AG04449 (cell line): ENCODE measurements at regions of chr1 and their contacts with region 1.

Region 1: GRCh38 chr1:7667625-7668218 is 103.4 kb upstream of the VAMP3 start:
- DNase-seq: no peak
- H3K4me3 ChIP-seq: no peak overlapping the region
- CTCF ChIP-seq: peak; percentile 100

Region 2: DNA sequence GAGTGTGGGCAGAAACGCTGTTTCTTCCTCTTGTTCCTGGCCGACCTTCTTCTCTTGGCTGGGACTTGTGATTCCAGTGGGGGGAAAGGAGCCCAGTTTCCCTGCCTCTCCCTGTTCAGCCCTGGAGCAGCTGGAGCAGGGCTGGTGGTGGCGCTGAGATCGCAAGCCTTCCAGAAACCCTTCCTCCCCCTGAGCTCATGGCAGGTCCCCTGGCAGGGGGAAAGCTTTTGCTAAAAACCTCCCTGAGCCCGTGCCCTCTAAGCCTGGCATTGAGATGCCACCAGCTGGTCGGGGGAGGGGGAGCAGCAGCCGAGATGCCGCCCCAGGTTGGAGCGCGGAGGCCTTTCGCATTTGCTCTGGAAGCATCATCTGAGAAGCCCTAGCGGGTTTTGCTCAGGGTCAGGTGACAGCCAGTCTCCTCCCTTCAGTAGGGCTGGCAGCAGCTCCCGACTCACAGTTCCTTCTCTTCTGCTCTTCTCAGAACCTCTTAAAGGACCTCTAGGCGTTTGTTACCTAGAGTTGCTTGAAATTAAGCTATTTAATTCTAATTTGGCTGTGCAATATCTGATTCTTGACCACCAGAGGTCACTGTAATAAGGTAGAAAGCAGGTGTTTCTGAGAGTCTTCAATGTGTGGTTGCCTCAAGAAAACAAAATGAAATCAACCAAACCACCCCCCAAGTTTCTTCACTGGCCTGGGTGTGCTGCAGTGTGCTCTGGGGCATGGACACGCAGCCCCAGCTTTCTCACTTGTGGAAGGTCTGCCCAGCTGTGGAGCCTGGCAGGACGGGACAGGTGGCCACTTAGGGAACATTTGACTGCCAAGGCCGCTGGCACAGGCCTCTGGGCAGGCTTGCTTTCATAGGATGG is 625.2 kb before region 1 on chr1:
- CTCF ChIA-PET with region 1: interaction called, 17 read pairs
- POLR2A ChIA-PET with region 1: no interaction called
- DNase-seq: no peak
- H3K4me3 ChIP-seq: no peak overlapping the region
- CTCF ChIP-seq: peak; percentile 17

Region 3: GRCh38 chr1:7432102-7432899 is 235.4 kb before region 1 on chr1:
- CTCF ChIA-PET with region 1: no interaction called
- POLR2A ChIA-PET with region 1: no interaction called
- DNase-seq: no peak
- H3K4me3 ChIP-seq: no peak overlapping the region
- CTCF ChIP-seq: no peak

Region 4: GRCh38 chr1:7690496-7691182 is 22.9 kb after region 1 on chr1:
- CTCF ChIA-PET with region 1: interaction called, 52 read pairs
- POLR2A ChIA-PET with region 1: interaction called, 3 read pairs
- DNase-seq: no peak
- H3K4me3 ChIP-seq: no peak overlapping the region
- CTCF ChIP-seq: no peak

Region 5: GRCh38 chr1:7717744-7718368 is 50.1 kb after region 1 on chr1:
- CTCF ChIA-PET with region 1: interaction called, 10 read pairs
- POLR2A ChIA-PET with region 1: no interaction called
- DNase-seq: no peak
- H3K4me3 ChIP-seq: no peak overlapping the region
- CTCF ChIP-seq: no peak

Region 6: GRCh38 chr1:7752512-7753417 is 85.0 kb after region 1 on chr1:
- CTCF ChIA-PET with region 1: interaction called, 1,214 read pairs
- POLR2A ChIA-PET with region 1: interaction called, 5 read pairs
- DNase-seq: peak; percentile 9
- H3K4me3 ChIP-seq: peak overlapping the region; percentile 46
- CTCF ChIP-seq: peak; percentile 53

Region 7: GRCh38 chr1:7808253-7808844 is 140.6 kb after region 1 on chr1:
- CTCF ChIA-PET with region 1: interaction called, 14 read pairs
- POLR2A ChIA-PET with region 1: no interaction called
- DNase-seq: no peak
- H3K4me3 ChIP-seq: no peak overlapping the region
- CTCF ChIP-seq: peak; percentile 39

Region 8: GRCh38 chr1:7942214-7942921 is 274.6 kb after region 1 on chr1:
- CTCF ChIA-PET with region 1: interaction called, 21 read pairs
- POLR2A ChIA-PET with region 1: no interaction called
- DNase-seq: no peak
- H3K4me3 ChIP-seq: peak overlapping the region; percentile 44
- CTCF ChIP-seq: peak; percentile 69

Region 9: DNA sequence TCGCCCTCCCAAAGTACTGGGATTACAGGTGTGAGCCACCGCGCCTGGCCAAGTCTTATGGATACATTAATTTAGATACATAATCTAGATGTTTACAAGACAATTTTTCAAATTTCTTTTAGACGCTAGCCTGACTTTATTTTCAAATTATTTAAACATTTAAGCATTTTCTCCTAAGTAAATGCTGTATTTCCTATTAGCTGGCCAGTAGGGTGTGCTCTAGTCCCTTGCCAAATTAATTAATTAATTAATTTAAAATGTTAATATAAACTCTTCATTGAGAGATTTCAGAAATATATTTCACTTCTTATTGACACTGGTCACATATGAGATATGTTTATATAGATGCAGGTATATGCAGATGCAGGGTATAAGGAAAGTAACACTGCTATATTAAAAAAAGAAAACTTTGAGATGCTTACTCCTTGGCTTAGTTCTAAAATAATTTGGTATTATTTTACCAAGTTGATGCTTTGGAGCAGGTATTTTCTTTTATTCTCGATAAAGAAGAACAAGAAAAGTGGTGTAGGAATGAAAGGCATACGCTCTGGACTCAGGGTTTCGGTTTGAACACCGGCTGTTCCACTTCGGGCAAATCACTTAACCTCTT is 363.6 kb after region 1 on chr1:
- CTCF ChIA-PET with region 1: no interaction called
- POLR2A ChIA-PET with region 1: no interaction called
- DNase-seq: no peak
- H3K4me3 ChIP-seq: no peak overlapping the region
- CTCF ChIP-seq: peak; percentile 14